SK-N-SH (cell line): ENCODE measurements at regions of chr11 and their contacts with region 1.

Region 1: DNA sequence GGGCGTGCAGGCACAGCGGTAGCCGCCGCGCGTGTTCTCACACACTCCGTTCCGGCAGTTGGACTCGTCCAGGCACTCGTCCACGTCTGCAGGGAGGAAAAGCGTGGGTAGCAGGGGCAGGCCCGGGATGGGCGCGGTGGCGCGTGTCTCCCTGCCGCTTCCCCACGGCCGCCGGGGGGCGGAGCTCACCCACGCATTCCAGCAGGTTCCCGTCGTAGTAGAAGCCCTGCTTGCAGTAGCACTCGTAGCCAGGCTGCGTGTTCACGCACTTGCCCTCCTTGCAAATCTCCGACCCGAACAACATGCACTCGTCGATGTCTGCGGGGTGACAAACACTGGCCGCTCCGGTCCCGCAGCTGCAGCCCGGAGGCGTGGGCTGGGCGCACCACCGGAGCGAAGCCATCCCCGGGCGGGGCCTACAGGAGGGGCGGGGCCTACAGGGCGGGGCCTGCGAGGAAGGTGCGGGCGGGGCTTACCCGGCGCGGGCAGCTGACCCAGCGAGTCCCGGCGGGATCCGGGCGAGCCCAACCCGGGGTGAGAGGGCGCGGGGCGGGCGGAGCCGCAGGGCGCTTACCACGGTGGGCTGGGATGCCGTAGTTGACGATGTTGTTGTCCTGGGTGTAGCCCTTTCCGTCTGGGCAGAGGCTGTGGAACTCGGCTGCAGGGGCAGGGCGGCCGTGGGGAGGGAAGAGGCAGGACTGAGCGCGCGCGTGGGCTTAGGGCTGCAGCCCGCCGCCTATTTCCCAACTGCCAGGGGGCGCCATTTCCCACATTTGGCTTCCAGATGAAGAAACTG is 15.6 kb downstream of the SCYL1 start:
- DNase-seq: peak; percentile 99
- H3K4me3 ChIP-seq: peak overlapping the region; percentile 43 to 49
- H3K27ac ChIP-seq: peak overlapping the region; percentile 29 to 81
- H3K4me1 ChIP-seq: peaks cover 4 to 12% of the 10 kb centered on the region in 2 experiments; a peak in 1 of 4 replicates
- H3K27me3 ChIP-seq: no peaks in the 10 kb centered on the region
- CTCF ChIP-seq: peak; percentile 87
- EP300 ChIP-seq: no peak
- RAD21 ChIP-seq: peak; percentile 80

Region 2: GRCh38 chr11:65117216-65118096 is 423.0 kb before region 1 on chr11 and contains the start of gene ZNHIT2:
- CTCF ChIA-PET with region 1: no interaction called
- POLR2A ChIA-PET with region 1: no interaction called
- DNase-seq: peak; percentile 94
- H3K4me3 ChIP-seq: peak within 1 kb of the TSS; percentile 74 to 86
- H3K27ac ChIP-seq: peak within 1 kb of the TSS; percentile 67 to 89
- H3K4me1 ChIP-seq: peaks cover 22 to 51% of the 10 kb centered on the region in 2 experiments; a peak in 3 of 4 replicates
- H3K27me3 ChIP-seq: no peaks in the 10 kb centered on the region
- CTCF ChIP-seq: peak; percentile 90
- EP300 ChIP-seq: 0 out of 4 replicates have a peak, but pooled peaks of 1 of the 2 experiments have one; percentile 18
- RAD21 ChIP-seq: peak; percentile 84
- polyA plus RNA-seq, gene ZNHIT2: 5.6 and 5.9 TPM in 2 replicates

Region 3: GRCh38 chr11:65477149-65477965 is 63.1 kb before region 1 on chr11:
- CTCF ChIA-PET with region 1: no interaction called
- POLR2A ChIA-PET with region 1: no interaction called
- DNase-seq: peak; percentile 98
- H3K4me3 ChIP-seq: peak overlapping the region; percentile 67 to 70
- H3K27ac ChIP-seq: peak overlapping the region; percentile 91 to 100
- H3K4me1 ChIP-seq: peaks cover 30 to 38% of the 10 kb centered on the region in 2 experiments
- H3K27me3 ChIP-seq: no peaks in the 10 kb centered on the region
- CTCF ChIP-seq: no peak
- EP300 ChIP-seq: peak; percentile 25 to 60; a peak in 2 of 4 replicates
- RAD21 ChIP-seq: no peak

Region 4: DNA sequence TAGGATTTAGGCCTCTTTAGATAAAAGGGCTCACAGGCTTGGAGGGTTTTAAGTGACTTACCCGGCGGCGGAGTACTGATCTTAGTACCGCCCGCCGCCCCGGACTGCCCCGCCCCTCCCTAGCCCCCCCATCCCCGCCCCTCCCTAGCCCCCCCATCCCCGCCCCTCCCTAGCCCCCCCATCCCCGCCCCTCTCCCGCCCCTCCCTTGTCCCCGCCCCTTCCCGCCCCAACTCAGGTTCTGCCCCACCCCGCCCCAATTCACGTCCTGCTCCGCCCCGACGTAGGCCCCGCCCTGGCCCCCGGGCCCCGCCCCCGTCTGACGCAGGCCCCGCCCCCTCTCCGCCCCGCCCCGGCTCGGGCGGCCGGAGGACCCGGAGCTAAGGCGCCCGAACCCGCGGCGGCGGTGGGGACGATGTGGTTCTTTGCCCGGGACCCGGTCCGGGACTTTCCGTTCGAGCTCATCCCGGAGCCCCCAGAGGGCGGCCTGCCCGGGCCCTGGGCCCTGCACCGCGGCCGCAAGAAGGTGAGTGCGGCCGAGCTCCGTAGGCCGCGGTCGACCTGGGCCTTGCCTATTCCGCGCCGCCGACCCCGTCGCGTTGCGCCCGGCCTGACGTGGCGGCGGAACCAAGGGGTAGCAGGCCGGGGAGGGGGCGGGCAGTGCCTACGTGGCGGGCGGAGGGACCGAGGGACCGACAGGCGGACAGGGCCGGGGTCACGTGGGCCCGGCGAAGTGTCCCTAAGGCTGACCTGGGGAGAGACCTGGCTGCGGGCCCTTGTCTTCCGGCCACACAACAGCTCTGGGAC is 15.6 kb before region 1 on chr11 and contains the start of gene SCYL1:
- CTCF ChIA-PET with region 1: interaction called, 69 read pairs
- POLR2A ChIA-PET with region 1: interaction called, 6 read pairs
- DNase-seq: peak; percentile 99
- H3K4me3 ChIP-seq: peak within 1 kb of the TSS; percentile 78 to 81
- H3K27ac ChIP-seq: peak within 1 kb of the TSS; percentile 56 to 62; a peak in 2 of 4 replicates
- H3K4me1 ChIP-seq: peaks cover 5 to 18% of the 10 kb centered on the region in 2 experiments; a peak in 3 of 4 replicates
- H3K27me3 ChIP-seq: no peaks in the 10 kb centered on the region
- CTCF ChIP-seq: no peak
- EP300 ChIP-seq: no peak; a peak in 1 of 4 replicates
- RAD21 ChIP-seq: no peak
- polyA plus RNA-seq, gene SCYL1: 76.7 and 79.9 TPM in 2 replicates

Region 5: DNA sequence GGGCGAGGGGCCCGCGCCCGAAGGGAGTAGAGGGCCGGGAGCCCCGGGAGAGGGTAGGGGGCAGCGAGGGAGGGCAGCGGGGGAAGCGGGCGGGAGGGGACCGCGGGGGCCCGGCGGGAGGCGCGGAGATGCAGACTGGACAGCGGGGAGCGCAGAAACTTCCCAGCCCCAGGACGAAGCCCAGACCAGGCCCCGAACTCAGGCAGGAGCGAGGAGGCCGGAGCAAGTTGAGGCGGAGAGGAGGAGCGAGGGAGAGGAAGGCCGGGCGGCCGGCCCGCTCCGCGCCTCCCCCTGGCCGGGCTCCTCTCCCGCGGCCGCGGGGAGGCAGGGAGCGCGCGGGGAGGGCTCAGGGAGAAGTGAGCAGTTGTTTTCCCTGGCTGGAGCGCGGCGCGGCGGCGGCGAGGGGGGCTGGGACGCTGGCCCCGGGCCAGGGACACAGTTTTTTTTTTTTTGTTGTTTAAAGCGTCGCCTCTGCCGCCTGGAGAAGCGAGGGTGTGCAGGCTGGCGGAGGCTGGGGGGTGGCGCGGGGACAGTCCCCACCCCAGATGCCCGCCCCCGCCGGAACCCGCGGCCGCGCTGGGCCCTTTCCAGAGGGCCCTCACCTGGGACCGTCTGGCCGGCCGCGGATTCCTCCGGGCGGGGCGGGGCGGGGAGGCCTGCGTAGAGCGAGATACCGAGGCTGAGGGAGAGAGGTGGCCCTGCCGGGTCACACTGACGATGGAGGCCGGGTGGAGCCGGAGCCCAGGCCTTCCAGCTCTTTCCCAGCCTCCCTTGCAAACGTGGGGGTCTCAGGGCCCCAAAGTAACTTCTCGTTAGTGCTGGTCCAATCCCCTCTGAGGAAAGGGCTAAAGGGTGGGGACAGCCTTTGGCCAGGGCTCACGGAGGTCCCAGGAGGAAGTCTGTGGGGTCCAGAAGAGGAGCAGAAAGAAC is 17.8 kb after region 1 on chr11 and contains the start of gene LTBP3:
- CTCF ChIA-PET with region 1: interaction called, 88 read pairs
- POLR2A ChIA-PET with region 1: interaction called, 4 read pairs
- DNase-seq: peak; percentile 90
- H3K4me3 ChIP-seq: peak within 1 kb of the TSS; percentile 65 to 85
- H3K27ac ChIP-seq: peak within 1 kb of the TSS; percentile 97
- H3K4me1 ChIP-seq: peaks cover 53 to 67% of the 10 kb centered on the region in 2 experiments
- H3K27me3 ChIP-seq: no peaks in the 10 kb centered on the region
- CTCF ChIP-seq: no peak
- EP300 ChIP-seq: peak in 1 of 2 experiments; percentile 50; a peak in 1 of 4 replicates
- RAD21 ChIP-seq: no peak
- polyA plus RNA-seq, gene LTBP3: 92.1 and 167 TPM in 2 replicates

Region 6: GRCh38 chr11:65588199-65589054 is 47.9 kb after region 1 on chr11:
- CTCF ChIA-PET with region 1: interaction called, 122 read pairs
- POLR2A ChIA-PET with region 1: interaction called, 4 read pairs
- DNase-seq: peak; percentile 88
- H3K4me3 ChIP-seq: no peak overlapping the region
- H3K27ac ChIP-seq: no peak overlapping the region
- H3K4me1 ChIP-seq: peaks cover 0 to 13% of the 10 kb centered on the region in 2 experiments; a peak in 1 of 4 replicates
- H3K27me3 ChIP-seq: no peaks in the 10 kb centered on the region
- CTCF ChIP-seq: peak; percentile 58
- EP300 ChIP-seq: no peak
- RAD21 ChIP-seq: peak; percentile 60

Region 7: DNA sequence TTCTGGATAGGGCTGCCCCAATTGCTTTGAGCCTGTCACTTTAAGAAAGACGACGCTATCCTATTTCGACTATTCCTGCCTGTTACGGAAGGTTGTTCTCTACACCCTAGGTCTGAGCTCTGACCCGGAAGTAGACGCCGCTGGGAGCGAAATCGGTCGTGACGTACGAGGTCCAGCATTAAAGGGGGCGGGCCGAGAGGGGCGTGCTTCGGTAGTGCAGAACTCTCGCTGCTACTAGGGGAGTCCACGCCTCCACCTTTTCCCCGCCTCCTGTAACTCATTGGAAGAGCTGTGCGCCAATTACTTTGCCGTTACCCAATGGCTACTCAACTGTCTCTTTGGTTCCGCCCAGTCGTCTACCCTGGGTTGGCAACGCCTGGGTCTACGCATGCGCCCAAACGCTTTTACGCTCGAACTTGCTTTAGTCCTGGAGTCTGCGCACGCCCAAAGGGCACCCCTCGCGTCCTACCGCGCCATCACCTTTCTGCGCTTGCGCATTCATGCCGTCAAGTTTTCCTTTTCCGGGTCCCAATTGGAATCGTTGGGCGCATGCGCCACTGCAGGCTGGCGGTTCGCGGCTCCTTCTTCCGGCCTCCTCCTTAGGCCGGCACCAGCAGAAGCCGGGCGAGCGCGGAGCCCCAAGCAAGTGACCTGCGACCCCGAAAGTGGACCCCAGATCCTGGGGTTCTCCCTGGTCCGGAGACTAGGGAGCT is 74.9 kb after region 1 on chr11 and contains the start of gene PCNX3:
- CTCF ChIA-PET with region 1: interaction called, 13 read pairs
- POLR2A ChIA-PET with region 1: interaction called, 4 read pairs
- DNase-seq: peak; percentile 100
- H3K4me3 ChIP-seq: peak within 1 kb of the TSS; percentile 87 to 95
- H3K27ac ChIP-seq: peak within 1 kb of the TSS; percentile 83 to 93
- H3K4me1 ChIP-seq: peaks cover 25 to 36% of the 10 kb centered on the region in 2 experiments; a peak in 3 of 4 replicates
- H3K27me3 ChIP-seq: no peaks in the 10 kb centered on the region
- CTCF ChIP-seq: no peak
- EP300 ChIP-seq: peak in 1 of 2 experiments; percentile 39; a peak in 1 of 4 replicates
- RAD21 ChIP-seq: no peak
- polyA plus RNA-seq, gene PCNX3: 23.8 and 33.7 TPM in 2 replicates

Region 8: GRCh38 chr11:65817835-65818742 is 277.6 kb after region 1 on chr11:
- CTCF ChIA-PET with region 1: no interaction called
- POLR2A ChIA-PET with region 1: no interaction called
- DNase-seq: peak; percentile 99
- H3K4me3 ChIP-seq: peak overlapping the region; percentile 62 to 75
- H3K27ac ChIP-seq: peak overlapping the region in 1 of 2 experiments; percentile 62; a peak in 1 of 4 replicates
- H3K4me1 ChIP-seq: peaks cover 0 to 3% of the 10 kb centered on the region in 2 experiments; a peak in 1 of 4 replicates
- H3K27me3 ChIP-seq: no peaks in the 10 kb centered on the region
- CTCF ChIP-seq: peak; percentile 91
- EP300 ChIP-seq: no peak
- RAD21 ChIP-seq: peak; percentile 89